Activated CD4-positive, alpha-beta T cell treated with anti-CD3 and anti-CD28 coated beads, Interleukin-2, amount 10 ng/mL, durations not matched to agents 24 days and 14 days (primary cell): ENCODE measurements at regions of chr1 and their contacts with region 1.

Region 1: DNA sequence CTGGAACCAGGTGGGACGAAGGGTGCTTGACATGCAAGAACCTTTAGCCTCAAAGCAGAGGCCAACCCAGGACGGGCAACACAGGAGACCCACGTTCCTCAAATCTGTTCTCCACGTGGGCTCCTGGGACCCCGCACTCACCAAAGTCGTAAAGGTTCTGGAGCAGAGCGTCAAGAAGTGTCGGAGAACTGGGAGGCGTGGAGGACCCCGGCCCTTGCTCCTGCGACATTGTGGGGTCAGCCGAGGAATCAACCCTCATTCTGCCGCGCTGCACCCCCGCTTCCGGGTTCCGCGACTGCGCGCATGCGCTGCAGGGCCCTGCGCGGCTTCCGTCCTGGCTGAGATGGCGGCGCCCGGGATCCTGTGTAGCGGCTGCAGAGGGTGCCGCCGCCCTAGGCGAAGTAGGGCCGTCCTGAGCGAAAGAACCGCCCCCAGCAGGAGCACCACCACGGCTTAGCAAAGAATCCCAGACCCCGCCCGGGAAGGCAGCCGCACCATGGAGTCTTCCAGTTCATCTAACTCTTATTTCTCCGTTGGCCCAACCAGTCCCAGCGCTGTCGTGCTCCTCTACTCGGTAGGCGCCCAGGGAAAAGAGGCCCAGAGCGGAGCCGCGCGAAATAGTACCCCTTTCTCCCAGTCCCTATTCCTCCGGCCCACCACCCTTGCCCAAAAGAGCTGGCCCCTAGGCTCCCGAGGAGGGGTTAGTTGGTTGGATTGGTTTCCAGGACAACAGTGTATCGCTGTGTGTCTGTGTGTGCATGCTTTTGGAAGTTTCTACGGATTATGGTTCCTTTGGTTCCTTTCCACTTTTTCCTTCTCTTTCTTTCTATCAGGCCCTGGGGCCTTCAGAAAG is at the start of gene GNPAT:
- DNase-seq: peak; percentile 98
- H3K4me3 Mint-ChIP-seq: peak within 1 kb of the TSS; percentile 94
- H3K27ac Mint-ChIP-seq: peak within 1 kb of the TSS; percentile 97
- H3K4me1 Mint-ChIP-seq: peaks cover 52% of the 10 kb centered on the region
- H3K27me3 Mint-ChIP-seq: no peaks in the 10 kb centered on the region
- total RNA-seq, gene GNPAT: 45.6 and 47.5 TPM in 2 replicates

Region 2: GRCh38 chr1:230917284-230918135 is 323.6 kb before region 1 on chr1:
- intact Hi-C with region 1: loop called (anchors 1 kb)
- DNase-seq: peak; percentile 91
- H3K4me3 Mint-ChIP-seq: no peak overlapping the region
- H3K27ac Mint-ChIP-seq: no peak overlapping the region
- H3K4me1 Mint-ChIP-seq: peaks cover 7% of the 10 kb centered on the region
- H3K27me3 Mint-ChIP-seq: no peaks in the 10 kb centered on the region

Region 3: GRCh38 chr1:231200388-231201031 is 40.6 kb before region 1 on chr1:
- intact Hi-C with region 1: no loop called
- DNase-seq: no peak
- H3K4me3 Mint-ChIP-seq: no peak overlapping the region
- H3K27ac Mint-ChIP-seq: no peak overlapping the region
- H3K4me1 Mint-ChIP-seq: peaks cover 7% of the 10 kb centered on the region
- H3K27me3 Mint-ChIP-seq: peaks cover 26% of the 10 kb centered on the region

Region 4: DNA sequence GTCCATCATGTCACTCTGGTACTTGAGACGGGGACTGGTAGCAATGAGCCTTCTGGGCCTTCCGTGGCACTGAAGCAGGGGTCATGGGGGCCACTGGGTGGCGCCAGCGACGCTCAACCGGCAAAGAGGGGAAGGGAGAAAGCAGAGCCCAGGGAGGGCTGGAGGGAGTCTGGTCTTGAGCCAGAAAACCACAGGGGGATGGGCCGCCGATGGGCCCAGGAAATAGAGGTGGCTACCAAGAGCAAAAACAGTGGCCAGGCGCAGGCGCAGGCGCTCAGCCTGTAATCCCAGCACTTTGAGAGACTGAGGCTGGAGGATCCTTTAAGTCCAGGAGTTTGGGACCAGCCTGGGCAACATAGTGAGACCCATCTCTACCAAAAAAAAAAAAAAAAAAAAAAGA is 74.8 kb after region 1 on chr1:
- intact Hi-C with region 1: no loop called
- DNase-seq: peak; percentile 84
- H3K4me3 Mint-ChIP-seq: no peak overlapping the region
- H3K27ac Mint-ChIP-seq: no peak overlapping the region
- H3K4me1 Mint-ChIP-seq: peaks cover 3% of the 10 kb centered on the region
- H3K27me3 Mint-ChIP-seq: peaks cover 4% of the 10 kb centered on the region

Region 5: GRCh38 chr1:231337472-231338269 is 96.6 kb after region 1 on chr1 and contains the start of gene EXOC8:
- intact Hi-C with region 1: loop called (anchors 1 kb)
- DNase-seq: peak; percentile 100
- H3K4me3 Mint-ChIP-seq: peak within 1 kb of the TSS; percentile 95
- H3K27ac Mint-ChIP-seq: peak within 1 kb of the TSS; percentile 98
- H3K4me1 Mint-ChIP-seq: peaks cover 44% of the 10 kb centered on the region
- H3K27me3 Mint-ChIP-seq: peaks cover 3% of the 10 kb centered on the region
- total RNA-seq, gene EXOC8: 12.4 and 13.3 TPM in 2 replicates

Region 6: GRCh38 chr1:231603598-231604275 is 362.6 kb after region 1 on chr1:
- intact Hi-C with region 1: loop called (anchors 10 kb)
- DNase-seq: peak; percentile 84
- H3K4me3 Mint-ChIP-seq: peak overlapping the region; percentile 89
- H3K27ac Mint-ChIP-seq: peak overlapping the region; percentile 65
- H3K4me1 Mint-ChIP-seq: peaks cover 12% of the 10 kb centered on the region
- H3K27me3 Mint-ChIP-seq: peaks cover 10% of the 10 kb centered on the region